IMR-90 (cell line): ENCODE measurements at regions of chr9 and their contacts with region 1.

Region 1: GRCh38 chr9:115524453-115525059 is 406.6 kb upstream of the TNC start:
- DNase-seq: peak; percentile 77
- ATAC-seq: peak; percentile 95
- H3K4me3 ChIP-seq: no peak overlapping the region
- H3K27ac ChIP-seq: no peak overlapping the region
- H3K4me1 ChIP-seq: peaks cover 2% of the 10 kb centered on the region
- H3K27me3 ChIP-seq: no peaks in the 10 kb centered on the region
- CTCF ChIP-seq: peak; percentile 89
- POLR2A ChIP-seq: no peak
- RAD21 ChIP-seq: peak; percentile 93

Region 2: DNA sequence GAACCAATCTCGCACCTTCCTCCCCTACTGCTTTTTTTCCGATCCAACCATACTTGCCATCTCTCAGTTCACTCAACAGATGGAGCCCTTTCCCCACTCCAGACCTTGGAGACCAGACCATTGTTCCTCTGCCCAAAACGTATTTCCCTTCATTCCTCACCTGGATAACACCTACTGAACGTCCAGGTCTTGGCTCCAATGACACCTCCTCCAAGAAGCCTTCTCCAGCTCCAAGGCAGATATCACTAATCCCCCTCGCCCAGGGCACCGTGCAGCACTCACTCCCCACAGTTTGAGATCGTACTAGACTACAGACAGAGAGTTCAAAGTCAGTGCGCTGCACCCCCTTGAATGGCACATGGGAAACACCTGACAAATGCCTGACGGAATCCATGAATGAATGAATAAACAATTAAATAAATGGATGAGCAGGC is 1089.7 kb before region 1 on chr9:
- CTCF ChIA-PET with region 1: no interaction called
- POLR2A ChIA-PET with region 1: no interaction called
- dilution Hi-C with region 1: no loop called
- in situ Hi-C with region 1: loop called (anchors 25 kb)
- intact Hi-C with region 1: no loop called
- DNase-seq: peak; percentile 37
- ATAC-seq: peak; percentile 91
- H3K4me3 ChIP-seq: no peak overlapping the region
- H3K27ac ChIP-seq: no peak overlapping the region
- H3K4me1 ChIP-seq: no peaks in the 10 kb centered on the region
- H3K27me3 ChIP-seq: peaks cover 13% of the 10 kb centered on the region
- CTCF ChIP-seq: peak; percentile 69
- POLR2A ChIP-seq: no peak
- RAD21 ChIP-seq: peak; percentile 79

Region 3: GRCh38 chr9:114681594-114682332 is 842.8 kb before region 1 on chr9 and contains the start of gene TEX48:
- CTCF ChIA-PET with region 1: no interaction called
- POLR2A ChIA-PET with region 1: no interaction called
- dilution Hi-C with region 1: no loop called
- in situ Hi-C with region 1: no loop called
- intact Hi-C with region 1: loop called (anchors 5 kb)
- DNase-seq: peak; percentile 74
- ATAC-seq: peak; percentile 58
- H3K4me3 ChIP-seq: no peak within 1 kb of the TSS
- H3K27ac ChIP-seq: no peak within 1 kb of the TSS
- H3K4me1 ChIP-seq: peaks cover 9% of the 10 kb centered on the region
- H3K27me3 ChIP-seq: no peaks in the 10 kb centered on the region
- CTCF ChIP-seq: peak; percentile 70
- POLR2A ChIP-seq: no peak
- RAD21 ChIP-seq: peak; percentile 75
- total RNA-seq, gene TEX48: not detected in 2 replicates

Region 4: GRCh38 chr9:114906908-114907571 is 617.5 kb before region 1 on chr9:
- CTCF ChIA-PET with region 1: interaction called, 3 read pairs
- POLR2A ChIA-PET with region 1: no interaction called
- dilution Hi-C with region 1: no loop called
- in situ Hi-C with region 1: no loop called
- intact Hi-C with region 1: loop called (anchors 2 kb)
- DNase-seq: peak; percentile 61
- ATAC-seq: peak; percentile 76
- H3K4me3 ChIP-seq: no peak overlapping the region
- H3K27ac ChIP-seq: no peak overlapping the region
- H3K4me1 ChIP-seq: peaks cover 20% of the 10 kb centered on the region
- H3K27me3 ChIP-seq: no peaks in the 10 kb centered on the region; the same call in 1 of the 2 replicates
- CTCF ChIP-seq: peak; percentile 87
- POLR2A ChIP-seq: no peak
- RAD21 ChIP-seq: peak; percentile 89

Region 5: DNA sequence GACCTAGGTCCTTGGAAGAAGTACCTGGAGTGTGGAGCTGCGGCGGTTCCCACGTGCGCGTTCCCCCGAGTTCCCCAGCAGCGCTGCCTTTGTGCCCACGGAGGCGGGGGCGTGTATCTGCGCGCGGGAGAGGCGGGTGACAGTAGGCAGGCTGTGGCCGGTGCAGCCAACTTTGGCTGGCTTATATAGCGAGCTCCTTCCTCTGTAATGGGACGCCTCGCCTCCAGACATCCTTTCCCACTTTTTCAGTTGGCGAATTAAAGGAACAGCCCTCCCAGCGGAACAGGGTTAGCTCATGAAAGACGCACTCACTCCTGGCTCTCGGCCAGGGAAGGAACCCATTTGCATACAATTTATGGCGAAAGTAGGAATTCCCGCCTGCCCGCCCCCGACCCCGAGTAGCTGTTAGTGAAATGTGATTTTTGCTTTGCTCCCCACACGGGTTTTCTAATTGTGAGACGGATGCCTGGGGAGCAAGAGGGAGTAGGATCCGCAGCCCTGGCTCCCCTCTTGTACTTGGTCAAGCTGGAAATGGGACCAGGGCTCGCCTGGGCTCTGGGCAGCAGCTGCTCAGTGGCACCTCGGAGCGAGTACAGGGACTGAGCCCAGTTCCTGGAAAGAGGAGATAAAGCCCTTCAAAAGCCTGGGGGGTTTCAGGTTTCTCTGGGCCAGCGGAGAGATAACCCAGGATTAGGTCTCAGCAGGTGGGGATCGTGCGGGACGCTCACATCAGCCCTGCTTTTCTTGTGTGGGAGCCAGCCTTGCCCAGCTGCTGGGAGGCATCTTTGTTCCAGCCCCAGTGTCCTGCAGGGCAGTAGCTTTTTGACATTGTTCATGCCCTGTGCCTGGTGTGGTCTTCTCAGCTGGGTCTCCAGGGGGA is 406.3 kb before region 1 on chr9 and contains the start of gene TNC:
- CTCF ChIA-PET with region 1: no interaction called
- POLR2A ChIA-PET with region 1: interaction called, 3 read pairs
- dilution Hi-C with region 1: no loop called
- in situ Hi-C with region 1: loop called (anchors 10 kb)
- intact Hi-C with region 1: loop called (anchors 1 kb)
- DNase-seq: peak; percentile 92
- ATAC-seq: peak; percentile 63
- H3K4me3 ChIP-seq: peak within 1 kb of the TSS; percentile 84
- H3K27ac ChIP-seq: peak within 1 kb of the TSS; percentile 91
- H3K4me1 ChIP-seq: peaks cover 14% of the 10 kb centered on the region
- H3K27me3 ChIP-seq: no peaks in the 10 kb centered on the region; the same call in 1 of the 2 replicates
- CTCF ChIP-seq: no peak
- POLR2A ChIP-seq: peak; percentile 96
- RAD21 ChIP-seq: no peak
- total RNA-seq, gene TNC: 170 and 192 TPM in 2 replicates

Region 6: GRCh38 chr9:115250621-115251032 is 273.9 kb before region 1 on chr9:
- CTCF ChIA-PET with region 1: interaction called, 3 read pairs
- POLR2A ChIA-PET with region 1: no interaction called
- dilution Hi-C with region 1: no loop called
- in situ Hi-C with region 1: no loop called
- intact Hi-C with region 1: loop called (anchors 5 kb)
- DNase-seq: peak; percentile 98
- ATAC-seq: peak; percentile 92
- H3K4me3 ChIP-seq: no peak overlapping the region
- H3K27ac ChIP-seq: no peak overlapping the region
- H3K4me1 ChIP-seq: peaks cover 9% of the 10 kb centered on the region
- H3K27me3 ChIP-seq: no peaks in the 10 kb centered on the region
- CTCF ChIP-seq: no peak; the same call in 1 of the 2 replicates
- POLR2A ChIP-seq: no peak
- RAD21 ChIP-seq: no peak; the same call in 1 of the 2 replicates